ENCODE measurements at regions of chr7 and their contacts with region 1.

Region 1: GRCh38 chr7:155860840-155861479 is 48.7 kb upstream of the SHH start:
- DNase-seq: peak; percentile 60 to 92
- ATAC-seq: peak; percentile 80 to 87
- H3K4me3 ChIP-seq: peak overlapping the region; percentile 7; the same call in 2 of the 3 replicates
- H3K27ac ChIP-seq: peak overlapping the region; percentile 82 to 87
- H3K4me1 ChIP-seq: peaks cover 61% of the 10 kb centered on the region
- CTCF ChIP-seq: no peak
- EP300 ChIP-seq: peak; percentile 97
- POLR2A ChIP-seq: no peak
- RAD21 ChIP-seq: peak; percentile 28 to 79

Region 2: DNA sequence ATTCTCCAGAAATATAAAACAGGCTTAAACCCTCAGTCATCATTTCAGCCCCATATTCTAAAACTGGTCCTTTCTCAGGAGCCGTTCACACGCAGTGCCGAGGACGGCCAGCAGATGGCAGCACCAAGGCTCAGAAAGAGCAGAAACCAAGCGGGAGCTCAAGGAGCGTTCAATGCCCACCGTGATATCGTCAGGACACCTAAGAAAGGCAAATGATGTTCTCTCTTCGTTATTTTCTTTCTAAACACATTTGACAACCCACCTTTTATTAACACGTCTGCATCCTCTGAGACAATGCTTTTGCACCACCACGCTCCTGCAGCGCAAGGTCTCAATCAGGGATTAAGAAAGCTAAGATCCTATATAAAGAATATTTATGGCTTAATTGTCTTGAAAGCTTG is 262.1 kb before region 1 on chr7:
- CTCF ChIA-PET with region 1: no interaction called
- POLR2A ChIA-PET with region 1: no interaction called
- DNase-seq: peak; percentile 70 to 75
- ATAC-seq: peak; percentile 74 to 91
- H3K4me3 ChIP-seq: no peak overlapping the region
- H3K27ac ChIP-seq: peak overlapping the region; percentile 16 to 49; a peak in 2 of 6 replicates
- H3K4me1 ChIP-seq: peaks cover 27% of the 10 kb centered on the region
- CTCF ChIP-seq: peak; percentile 91
- EP300 ChIP-seq: no peak
- POLR2A ChIP-seq: no peak
- RAD21 ChIP-seq: peak; percentile 88 to 89

Region 3: GRCh38 chr7:155843426-155844018 is 17.4 kb before region 1 on chr7:
- CTCF ChIA-PET with region 1: interaction called, 12 read pairs
- POLR2A ChIA-PET with region 1: interaction called, 4 read pairs
- DNase-seq: no peak
- ATAC-seq: no peak; a peak in 2 of 6 replicates
- H3K4me3 ChIP-seq: no peak overlapping the region
- H3K27ac ChIP-seq: peak overlapping the region; percentile 81 to 88
- H3K4me1 ChIP-seq: peaks cover 22% of the 10 kb centered on the region
- CTCF ChIP-seq: no peak
- EP300 ChIP-seq: no peak
- POLR2A ChIP-seq: no peak
- RAD21 ChIP-seq: no peak